HCT116 (cell line): ENCODE measurements at regions of chr4 and their contacts with region 1.

Region 1: DNA sequence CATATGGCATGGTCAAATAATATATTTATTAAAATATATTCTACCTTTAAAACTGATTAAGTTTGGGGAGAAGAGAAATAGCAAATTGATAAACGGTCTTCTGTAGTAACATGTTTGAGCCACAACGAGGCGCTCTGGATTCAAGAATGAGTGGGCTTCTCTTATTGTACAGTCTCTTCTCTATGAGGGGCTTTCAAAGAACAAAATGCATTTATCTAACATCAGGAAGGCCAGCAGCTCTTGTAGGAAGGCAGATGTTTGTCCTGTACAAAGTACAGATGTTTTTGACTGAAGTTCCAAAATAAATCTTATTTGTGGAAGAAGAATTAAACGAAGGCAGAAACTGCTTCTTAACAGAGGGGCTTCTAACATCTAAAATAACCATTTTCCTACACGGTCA is 153.6 kb downstream of the RASL11B start:
- DNase-seq: peak; percentile 26
- ATAC-seq: peak; percentile 52; the same call in 1 of the 2 replicates
- H3K4me3 ChIP-seq: no peak overlapping the region
- H3K27ac ChIP-seq: no peak overlapping the region
- H3K4me1 ChIP-seq: peaks cover 3 to 8% of the 10 kb centered on the region in 2 experiments; a peak in 2 of 4 replicates
- H3K27me3 ChIP-seq: no peaks in the 10 kb centered on the region
- CTCF ChIP-seq: peak; percentile 57 to 73 (median 60); a peak in 5 of 6 replicates
- POLR2A ChIP-seq: no peak
- RAD21 ChIP-seq: peak; percentile 73

Region 2: GRCh38 chr4:53653484-53654053 is 637.9 kb after region 1 on chr4:
- CTCF ChIA-PET with region 1: no interaction called
- POLR2A ChIA-PET with region 1: no interaction called
- RAD21 ChIA-PET with region 1: no interaction called
- intact Hi-C with region 1: loop called (anchors 10 kb)
- DNase-seq: no peak
- ATAC-seq: no peak
- H3K4me3 ChIP-seq: no peak overlapping the region
- H3K27ac ChIP-seq: no peak overlapping the region
- H3K4me1 ChIP-seq: peaks cover 0 to 7% of the 10 kb centered on the region in 2 experiments; a peak in 1 of 4 replicates
- H3K27me3 ChIP-seq: no peaks in the 10 kb centered on the region
- CTCF ChIP-seq: 0 out of 6 replicates have a peak, but pooled peaks of 2 of the 3 experiments have one; percentile 9 to 11
- POLR2A ChIP-seq: no peak
- RAD21 ChIP-seq: peak; percentile 30; the same call in 1 of the 2 replicates

Region 3: DNA sequence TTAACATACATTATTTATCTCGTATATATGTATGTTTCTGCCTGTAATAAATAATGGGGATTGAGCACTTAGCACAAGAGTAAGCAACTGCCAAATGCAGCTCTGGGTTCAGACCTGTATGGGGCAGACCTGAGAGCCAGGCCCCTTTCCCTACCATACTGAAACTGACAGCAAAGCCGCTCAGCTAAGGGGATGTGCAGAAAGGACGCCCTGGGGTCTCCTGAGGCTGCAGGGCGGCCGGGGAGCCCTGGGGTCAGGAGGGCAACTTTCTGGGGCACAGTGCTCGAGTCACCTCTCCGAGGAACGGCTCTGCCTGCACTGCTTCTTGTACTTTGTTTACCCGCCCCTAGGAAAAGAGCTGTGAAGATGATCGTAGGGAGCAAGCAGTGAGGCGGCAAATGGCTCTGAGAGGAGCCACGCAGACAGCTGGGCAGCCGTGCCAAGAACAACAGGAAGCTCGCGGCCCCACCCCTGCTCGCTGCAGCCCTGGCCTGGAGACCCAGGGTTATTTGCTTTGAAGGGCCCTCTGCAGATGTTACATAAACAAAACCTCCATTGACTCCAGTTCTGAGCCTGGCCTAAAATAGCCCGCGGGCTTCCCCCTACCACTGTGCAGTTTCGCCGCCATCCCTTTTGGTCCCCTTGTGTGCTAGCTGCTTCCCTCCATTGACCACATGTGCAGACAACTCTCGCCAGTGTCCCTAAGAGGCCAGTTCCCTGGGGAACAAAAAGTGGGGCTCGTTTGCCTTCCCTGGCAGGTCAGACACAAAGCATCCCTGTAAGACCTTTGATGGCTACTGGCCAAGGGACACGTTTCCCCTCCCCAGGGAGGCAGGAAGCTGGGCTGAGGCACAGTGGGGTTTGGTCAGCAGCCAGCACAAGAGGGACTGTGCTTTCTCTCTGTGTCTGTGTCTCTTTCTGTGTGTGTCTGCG is 686.9 kb after region 1 on chr4:
- CTCF ChIA-PET with region 1: no interaction called
- POLR2A ChIA-PET with region 1: no interaction called
- RAD21 ChIA-PET with region 1: no interaction called
- intact Hi-C with region 1: loop called (anchors 10 kb)
- DNase-seq: no peak
- ATAC-seq: peak; percentile 75
- H3K4me3 ChIP-seq: peak overlapping the region; percentile 21 to 38
- H3K27ac ChIP-seq: no peak overlapping the region
- H3K4me1 ChIP-seq: peaks cover 12 to 15% of the 10 kb centered on the region in 2 experiments
- H3K27me3 ChIP-seq: no peaks in the 10 kb centered on the region; the same call in 1 of the 2 replicates
- CTCF ChIP-seq: peak in 1 of 3 experiments; percentile 22; a peak in 2 of 6 replicates
- POLR2A ChIP-seq: no peak
- RAD21 ChIP-seq: no peak

Region 4: DNA sequence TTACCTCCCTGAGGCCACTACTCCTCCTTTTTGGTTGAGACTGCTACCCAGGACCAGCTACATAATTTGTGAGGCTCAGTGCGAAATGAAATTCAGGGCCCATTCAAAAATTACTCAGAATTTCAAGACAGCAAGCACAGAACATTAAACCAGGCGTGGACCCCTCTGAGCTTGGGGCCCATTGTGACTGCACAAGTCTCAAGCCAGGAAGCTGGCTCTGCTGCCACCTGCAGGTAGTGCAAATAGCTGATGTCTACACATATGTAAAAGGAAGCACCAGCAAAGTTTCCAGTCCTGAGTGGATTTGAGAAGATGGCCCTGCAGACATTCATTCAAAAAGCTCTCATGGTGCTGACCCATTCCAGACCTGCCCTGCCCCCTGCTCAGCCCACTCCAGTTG is 789.0 kb after region 1 on chr4:
- CTCF ChIA-PET with region 1: interaction called, 5 read pairs
- POLR2A ChIA-PET with region 1: no interaction called
- RAD21 ChIA-PET with region 1: no interaction called
- intact Hi-C with region 1: loop called (anchors 10 kb)
- DNase-seq: peak; percentile 24
- ATAC-seq: peak; percentile 70
- H3K4me3 ChIP-seq: no peak overlapping the region
- H3K27ac ChIP-seq: no peak overlapping the region
- H3K4me1 ChIP-seq: no peaks in the 10 kb centered on the region
- H3K27me3 ChIP-seq: peaks cover 34% of the 10 kb centered on the region
- CTCF ChIP-seq: peak; percentile 40 to 71 (median 61); a peak in 5 of 6 replicates
- POLR2A ChIP-seq: no peak
- RAD21 ChIP-seq: peak; percentile 57